Sigmoid colon (tissue), 7 donors: ENCODE measurements at regions of chr2 and their contacts with region 1.

Region 1: GRCh38 chr2:101831351-101831865 is 133.9 kb downstream of the MAP4K4 start:
- DNase-seq: peak; percentile 84
- H3K4me3 ChIP-seq: no peak overlapping the region
- H3K27ac ChIP-seq: peak overlapping the region in 3 of 4 donors; percentile 23 to 67 (median 40)
- H3K4me1 ChIP-seq: peaks cover 0 to 46% (median 40%) of the 10 kb centered on the region in 4 donors
- H3K27me3 ChIP-seq: no peaks in the 10 kb centered on the region
- CTCF ChIP-seq: peak; percentile 51 to 81 (median 70)
- EP300 ChIP-seq: no peak
- POLR2A ChIP-seq: no peak

Region 2: DNA sequence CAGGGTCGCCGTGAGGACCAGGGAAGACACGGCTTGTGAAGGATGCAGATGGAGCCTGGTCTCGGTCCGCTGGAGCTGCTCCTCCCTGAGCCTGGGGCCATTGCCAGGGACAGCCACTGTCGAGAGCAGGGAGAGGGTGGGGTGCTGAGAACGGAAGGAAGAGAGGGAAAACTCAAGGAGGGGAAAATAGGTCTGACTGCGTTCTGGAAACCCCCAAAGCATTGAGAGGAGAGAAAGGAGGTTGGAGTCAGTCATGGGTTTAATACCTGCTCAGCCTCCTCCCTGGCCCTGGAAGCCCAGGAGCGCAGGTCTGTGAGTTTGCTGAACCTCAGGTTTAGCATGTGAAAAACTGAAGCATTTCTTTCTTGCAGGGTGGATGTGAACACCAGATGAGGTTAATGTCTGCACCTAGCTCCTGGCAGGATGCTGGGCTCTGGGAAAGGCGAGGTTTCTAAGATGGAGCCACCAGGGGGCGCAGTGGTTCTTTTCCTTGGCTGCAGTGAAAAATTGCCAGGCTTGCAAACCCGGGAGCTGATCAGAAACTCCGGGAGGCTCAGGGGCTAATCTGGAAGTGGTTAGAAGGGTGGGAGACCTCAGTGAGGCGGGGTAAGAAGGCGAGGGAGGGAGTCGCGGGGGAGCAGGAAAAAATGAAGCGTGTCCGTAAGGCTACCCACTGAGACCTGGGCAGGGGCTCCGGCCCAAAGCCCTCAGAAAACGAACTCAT is 489.3 kb before region 1 on chr2:
- intact Hi-C with region 1: loop called (anchors 2 kb)
- DNase-seq: peak; percentile 84
- H3K4me3 ChIP-seq: no peak overlapping the region
- H3K27ac ChIP-seq: no peak overlapping the region
- H3K4me1 ChIP-seq: no peaks in the 10 kb centered on the region
- H3K27me3 ChIP-seq: no peaks in the 10 kb centered on the region
- CTCF ChIP-seq: peak; percentile 45 to 70 (median 59)
- EP300 ChIP-seq: no peak
- POLR2A ChIP-seq: no peak

Region 3: GRCh38 chr2:101419096-101419663 is 412.2 kb before region 1 on chr2:
- intact Hi-C with region 1: loop called (anchors 1 kb)
- DNase-seq: peak; percentile 73
- H3K4me3 ChIP-seq: no peak overlapping the region
- H3K27ac ChIP-seq: no peak overlapping the region
- H3K4me1 ChIP-seq: no peaks in the 10 kb centered on the region
- H3K27me3 ChIP-seq: no peaks in the 10 kb centered on the region
- CTCF ChIP-seq: peak in 3 of 4 experiments; percentile 46 to 69 (median 62)
- EP300 ChIP-seq: no peak
- POLR2A ChIP-seq: no peak

Region 4: DNA sequence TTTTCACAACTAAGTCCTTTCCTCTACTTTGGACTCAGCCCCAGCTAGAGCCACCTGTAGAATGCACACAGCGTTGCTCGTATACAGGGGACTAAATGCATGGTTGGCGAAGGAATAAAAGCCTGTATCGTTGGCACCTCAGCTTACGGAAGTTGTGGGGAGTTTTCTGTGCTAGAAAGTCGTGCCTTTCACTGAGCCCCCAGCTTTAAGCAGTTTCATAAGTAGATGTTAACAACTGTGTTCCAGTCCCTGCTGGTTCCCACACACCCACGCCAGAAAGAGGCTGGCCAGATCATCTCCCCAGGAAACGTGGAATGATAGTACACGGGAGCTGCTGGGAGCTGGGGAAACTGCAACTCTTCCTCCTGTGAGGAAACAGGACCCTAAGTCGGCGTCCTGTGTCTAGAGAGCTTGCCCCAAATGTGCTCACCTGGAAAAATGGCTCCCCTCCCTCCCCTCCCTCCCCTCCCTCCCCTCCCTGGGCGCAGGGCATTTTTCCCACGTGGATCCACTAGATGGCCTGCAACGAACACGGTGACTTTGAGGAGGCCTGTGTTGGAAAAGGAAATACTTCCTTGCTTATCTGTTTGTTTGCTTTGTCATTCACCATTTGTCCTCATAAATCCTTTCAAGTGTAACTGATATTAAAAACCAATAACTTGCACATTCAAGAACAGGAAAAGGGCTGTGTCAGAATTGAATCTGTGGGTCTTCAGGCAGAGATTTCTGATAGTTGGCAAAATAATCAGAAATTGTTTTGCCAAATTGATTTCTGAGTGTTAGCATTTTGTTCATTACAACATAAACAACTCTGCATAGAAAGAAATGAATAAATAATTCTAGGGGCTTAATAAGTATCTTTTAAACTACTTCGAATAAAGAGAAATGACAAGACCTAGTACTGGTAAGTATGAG is 312.6 kb before region 1 on chr2:
- intact Hi-C with region 1: loop called (anchors 2 kb)
- DNase-seq: no peak
- H3K4me3 ChIP-seq: no peak overlapping the region
- H3K27ac ChIP-seq: peak overlapping the region in 2 of 4 donors; percentile 17 to 35
- H3K4me1 ChIP-seq: peaks cover 0 to 19% (median 9%) of the 10 kb centered on the region in 4 donors
- H3K27me3 ChIP-seq: no peaks in the 10 kb centered on the region
- CTCF ChIP-seq: peak in 2 of 4 experiments; percentile 7 to 25
- EP300 ChIP-seq: no peak
- POLR2A ChIP-seq: no peak

Region 5: GRCh38 chr2:101619191-101619591 is 212.2 kb before region 1 on chr2:
- intact Hi-C with region 1: loop called (anchors 5 kb)
- DNase-seq: peak; percentile 78
- H3K4me3 ChIP-seq: peak overlapping the region in 1 of 4 donors; percentile 18
- H3K27ac ChIP-seq: no peak overlapping the region
- H3K4me1 ChIP-seq: peaks cover 0 to 10% (median 9%) of the 10 kb centered on the region in 4 donors
- H3K27me3 ChIP-seq: no peaks in the 10 kb centered on the region
- CTCF ChIP-seq: no peak
- EP300 ChIP-seq: no peak
- POLR2A ChIP-seq: no peak

Region 6: GRCh38 chr2:101697124-101698013 is 134.0 kb before region 1 on chr2 and contains the start of gene MAP4K4:
- intact Hi-C with region 1: loop called (anchors 5 kb)
- DNase-seq: peak; percentile 92
- H3K4me3 ChIP-seq: peak within 1 kb of the TSS; percentile 64 to 76 (median 68)
- H3K27ac ChIP-seq: peak within 1 kb of the TSS; percentile 88 to 90 (median 88)
- H3K4me1 ChIP-seq: peaks cover 0 to 41% (median 17%) of the 10 kb centered on the region in 4 donors
- H3K27me3 ChIP-seq: no peaks in the 10 kb centered on the region
- CTCF ChIP-seq: peak in 1 of 4 experiments; percentile 16
- EP300 ChIP-seq: no peak
- POLR2A ChIP-seq: no peak
- total RNA-seq, gene MAP4K4: 37.2 to 62.9 (median 48.9) TPM

Region 7: DNA sequence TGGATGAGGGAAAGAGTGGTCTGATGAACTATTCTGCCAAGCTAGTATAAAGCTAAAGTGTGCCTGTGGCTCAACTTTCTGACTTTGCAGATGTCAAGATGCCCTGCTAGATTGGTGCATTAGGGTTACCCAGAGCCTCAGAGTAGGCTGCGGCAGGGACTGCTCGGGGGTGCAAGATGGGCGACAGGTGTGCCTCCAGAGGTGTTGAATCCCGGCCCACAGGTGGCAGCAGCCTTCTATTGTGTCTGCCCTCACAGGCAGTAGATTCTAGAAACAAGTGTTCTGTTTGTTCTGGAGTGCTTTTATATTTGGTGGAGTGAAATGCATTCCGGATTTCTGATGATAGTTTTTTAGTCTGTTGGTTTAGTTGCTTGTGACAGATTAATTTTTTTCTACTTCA is 28.7 kb after region 1 on chr2:
- intact Hi-C with region 1: no loop called
- DNase-seq: no peak
- H3K4me3 ChIP-seq: no peak overlapping the region
- H3K27ac ChIP-seq: no peak overlapping the region
- H3K4me1 ChIP-seq: no peaks in the 10 kb centered on the region
- H3K27me3 ChIP-seq: no peaks in the 10 kb centered on the region
- CTCF ChIP-seq: no peak
- EP300 ChIP-seq: no peak
- POLR2A ChIP-seq: no peak

Region 8: DNA sequence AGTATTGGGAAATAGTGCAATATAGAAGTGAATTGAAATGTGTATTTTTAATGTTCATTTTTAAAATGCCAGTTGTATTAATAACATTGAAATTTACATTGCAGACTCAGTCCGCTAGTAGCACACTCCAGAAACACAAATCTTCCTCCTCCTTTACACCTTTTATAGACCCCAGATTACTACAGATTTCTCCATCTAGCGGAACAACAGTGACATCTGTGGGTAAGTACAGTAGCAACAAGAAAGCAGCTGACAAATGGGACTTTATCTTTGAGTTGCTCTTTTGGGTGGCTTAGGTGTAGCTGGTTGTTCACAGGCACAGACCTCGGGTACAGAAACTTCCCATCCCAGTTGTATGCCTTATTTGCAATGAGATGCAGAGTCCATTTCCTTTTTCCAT is 42.1 kb after region 1 on chr2:
- intact Hi-C with region 1: no loop called
- DNase-seq: no peak
- H3K4me3 ChIP-seq: no peak overlapping the region
- H3K27ac ChIP-seq: no peak overlapping the region
- H3K4me1 ChIP-seq: no peaks in the 10 kb centered on the region
- H3K27me3 ChIP-seq: no peaks in the 10 kb centered on the region
- CTCF ChIP-seq: peak in 1 of 4 experiments; percentile 16
- EP300 ChIP-seq: no peak
- POLR2A ChIP-seq: no peak

Region 9: GRCh38 chr2:101900375-101900774 is 69.0 kb after region 1 on chr2:
- intact Hi-C with region 1: no loop called
- DNase-seq: no peak
- H3K4me3 ChIP-seq: no peak overlapping the region
- H3K27ac ChIP-seq: no peak overlapping the region
- H3K4me1 ChIP-seq: no peaks in the 10 kb centered on the region
- H3K27me3 ChIP-seq: no peaks in the 10 kb centered on the region
- CTCF ChIP-seq: no peak
- EP300 ChIP-seq: no peak
- POLR2A ChIP-seq: no peak